ENCODE measurements at regions of chr5 and their contacts with region 1.

Region 1: GRCh38 chr5:119302916-119303897 is 52.6 kb upstream of the TNFAIP8 start:
- DNase-seq: peak; percentile 60 to 96
- H3K4me3 ChIP-seq: peak overlapping the region; percentile 7; the same call in 1 of the 2 replicates
- H3K27ac ChIP-seq: peak overlapping the region; percentile 65
- H3K4me1 ChIP-seq: peaks cover 40% of the 10 kb centered on the region
- H3K27me3 ChIP-seq: no peaks in the 10 kb centered on the region
- CTCF ChIP-seq: no peak

Region 2: GRCh38 chr5:119250946-119251901 is 52.0 kb before region 1 on chr5:
- CTCF ChIA-PET with region 1: no interaction called
- POLR2A ChIA-PET with region 1: no interaction called
- intact Hi-C with region 1: no loop called
- DNase-seq: no peak
- H3K4me3 ChIP-seq: no peak overlapping the region
- H3K27ac ChIP-seq: no peak overlapping the region
- H3K4me1 ChIP-seq: 0 out of 2 replicates have a peak, but pooled peaks cover 9% of the 10 kb centered on the region
- H3K27me3 ChIP-seq: no peaks in the 10 kb centered on the region
- CTCF ChIP-seq: no peak

Region 3: DNA sequence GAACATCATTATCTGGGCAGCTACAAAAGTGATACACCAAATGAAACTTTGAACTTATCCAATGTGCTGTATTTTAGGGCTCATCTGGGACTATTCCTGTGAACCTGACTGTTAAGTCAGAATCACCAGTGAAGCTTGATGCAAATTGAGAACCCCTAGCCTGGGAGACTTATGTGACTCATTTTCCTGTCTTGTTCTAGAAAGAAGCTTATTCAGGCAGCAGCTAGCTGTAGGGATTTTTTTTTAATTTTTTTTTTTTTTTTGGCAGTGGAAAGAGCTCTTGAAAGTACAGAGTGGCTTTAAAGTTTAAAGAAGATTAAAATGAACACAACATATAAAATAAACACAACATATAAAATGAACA is 28.5 kb before region 1 on chr5:
- CTCF ChIA-PET with region 1: no interaction called
- POLR2A ChIA-PET with region 1: no interaction called
- intact Hi-C with region 1: loop called (anchors 1 kb)
- DNase-seq: no peak
- H3K4me3 ChIP-seq: no peak overlapping the region
- H3K27ac ChIP-seq: peak overlapping the region; percentile 92
- H3K4me1 ChIP-seq: peaks cover 49% of the 10 kb centered on the region
- H3K27me3 ChIP-seq: no peaks in the 10 kb centered on the region
- CTCF ChIP-seq: no peak

Region 4: GRCh38 chr5:119287547-119288073 is 15.6 kb before region 1 on chr5:
- CTCF ChIA-PET with region 1: no interaction called
- POLR2A ChIA-PET with region 1: interaction called, 7 read pairs
- intact Hi-C with region 1: loop called (anchors 1 kb)
- DNase-seq: peak; percentile 32 to 91
- H3K4me3 ChIP-seq: peak overlapping the region; percentile 43; the same call in 1 of the 2 replicates
- H3K27ac ChIP-seq: peak overlapping the region; percentile 75
- H3K4me1 ChIP-seq: peaks cover 50% of the 10 kb centered on the region
- H3K27me3 ChIP-seq: no peaks in the 10 kb centered on the region
- CTCF ChIP-seq: no peak

Region 5: DNA sequence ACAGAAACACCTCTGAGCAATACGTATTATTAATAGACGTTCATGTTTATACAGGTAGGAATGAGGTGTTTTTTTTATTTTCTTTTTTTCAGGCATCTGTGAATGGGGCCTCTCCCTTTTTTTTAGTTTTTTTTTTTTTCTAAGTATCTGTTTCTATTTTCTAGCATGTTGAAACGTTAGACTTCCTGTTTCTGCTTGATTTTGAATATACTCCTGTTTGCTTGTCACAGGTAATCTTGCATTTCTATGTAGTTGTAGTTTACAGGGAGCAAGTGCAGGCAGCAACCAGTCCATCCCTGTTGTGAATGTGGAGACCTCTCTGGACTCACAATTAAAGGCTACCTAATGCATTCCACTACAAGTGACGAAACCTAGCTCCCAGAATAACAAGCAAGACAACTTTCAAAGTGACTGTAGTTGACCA is 29.8 kb after region 1 on chr5:
- CTCF ChIA-PET with region 1: no interaction called
- POLR2A ChIA-PET with region 1: no interaction called
- intact Hi-C with region 1: no loop called
- DNase-seq: no peak
- H3K4me3 ChIP-seq: no peak overlapping the region
- H3K27ac ChIP-seq: no peak overlapping the region
- H3K4me1 ChIP-seq: no peaks in the 10 kb centered on the region
- H3K27me3 ChIP-seq: no peaks in the 10 kb centered on the region
- CTCF ChIP-seq: no peak

Region 6: DNA sequence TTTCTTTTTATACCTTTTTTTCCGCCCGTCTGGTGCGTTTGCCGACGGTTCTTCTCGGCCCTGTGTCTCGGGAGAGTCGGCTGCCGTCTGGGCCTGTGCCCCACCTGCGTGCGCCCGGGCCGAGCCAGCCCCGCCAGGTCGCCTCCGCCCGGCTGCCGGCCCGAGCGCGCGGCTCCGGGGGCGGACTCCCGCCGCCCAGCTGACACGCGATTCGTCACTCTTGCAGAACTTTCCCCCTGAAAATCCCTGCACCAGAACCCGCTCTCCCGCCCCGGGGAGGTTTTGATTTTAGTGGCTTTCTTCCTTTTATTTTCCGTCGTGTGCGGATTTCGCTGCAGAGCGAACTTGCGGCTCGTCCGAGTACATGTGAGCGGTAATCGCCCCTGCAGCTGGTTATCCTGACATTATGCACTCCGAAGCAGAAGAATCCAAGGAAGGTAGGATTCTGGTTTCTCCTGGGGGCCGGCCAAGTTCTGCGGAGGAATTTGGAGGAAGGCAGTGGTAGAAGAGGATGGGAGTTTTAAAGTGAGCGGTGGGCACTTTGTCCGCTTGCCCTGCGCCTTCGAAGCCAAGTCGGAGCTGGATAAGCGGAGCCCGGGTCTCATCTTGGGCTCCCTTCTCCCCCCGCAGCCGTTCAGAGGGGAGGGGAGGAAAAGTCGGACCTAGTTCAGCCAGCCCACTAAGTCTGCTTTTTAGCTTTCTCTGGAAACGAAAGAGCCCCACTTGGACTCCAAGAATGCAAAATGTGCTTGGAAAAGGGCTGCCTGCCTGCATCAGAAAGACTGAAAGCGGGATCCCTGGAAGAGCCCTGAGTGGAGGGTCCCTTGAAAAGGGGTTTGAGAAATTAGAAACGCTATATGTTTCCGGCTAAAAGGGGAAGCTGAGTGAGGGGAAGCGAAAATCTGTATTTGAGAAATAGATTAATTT is 52.7 kb after region 1 on chr5 and contains the start of gene TNFAIP8:
- CTCF ChIA-PET with region 1: no interaction called
- POLR2A ChIA-PET with region 1: interaction called, 16 read pairs
- intact Hi-C with region 1: loop called (anchors 5 kb)
- DNase-seq: peak; percentile 56 to 58
- H3K4me3 ChIP-seq: peak within 1 kb of the TSS; percentile 96
- H3K27ac ChIP-seq: peak within 1 kb of the TSS; percentile 78
- H3K4me1 ChIP-seq: peaks cover 67% of the 10 kb centered on the region
- H3K27me3 ChIP-seq: no peaks in the 10 kb centered on the region
- CTCF ChIP-seq: no peak
- total RNA-seq, gene TNFAIP8: 15.0 and 16.4 TPM in 2 replicates

Region 7: GRCh38 chr5:120055858-120056257 is 752.7 kb after region 1 on chr5:
- CTCF ChIA-PET with region 1: no interaction called
- POLR2A ChIA-PET with region 1: no interaction called
- intact Hi-C with region 1: no loop called
- DNase-seq: no peak
- H3K4me3 ChIP-seq: no peak overlapping the region
- H3K27ac ChIP-seq: no peak overlapping the region
- H3K4me1 ChIP-seq: no peaks in the 10 kb centered on the region
- H3K27me3 ChIP-seq: no peaks in the 10 kb centered on the region
- CTCF ChIP-seq: peak; percentile 32; the same call in 1 of the 2 replicates

Region 8: GRCh38 chr5:120368923-120369715 is 1065.9 kb after region 1 on chr5:
- CTCF ChIA-PET with region 1: no interaction called
- POLR2A ChIA-PET with region 1: no interaction called
- intact Hi-C with region 1: no loop called
- DNase-seq: peak; percentile 53 to 73
- H3K4me3 ChIP-seq: no peak overlapping the region
- H3K27ac ChIP-seq: no peak overlapping the region
- H3K4me1 ChIP-seq: peaks cover 12% of the 10 kb centered on the region; the same call in 1 of the 2 replicates
- H3K27me3 ChIP-seq: no peaks in the 10 kb centered on the region
- CTCF ChIP-seq: no peak

Measured in PC-9 (cell line).